Activated B cell treated with CpG ODN at 0.5 μM for 24 hours (primary cell): ENCODE measurements at regions of chr13 and their contacts with region 1.

Region 1: GRCh38 chr13:110412132-110412914 is 105.2 kb downstream of the COL4A2 start:
- DNase-seq: peak; percentile 39
- ATAC-seq: peak; percentile 90
- H3K4me3 Mint-ChIP-seq: no peak overlapping the region
- H3K27ac Mint-ChIP-seq: no peak overlapping the region
- H3K4me1 Mint-ChIP-seq: peaks cover 3% of the 10 kb centered on the region
- H3K27me3 Mint-ChIP-seq: peaks cover 24% of the 10 kb centered on the region
- CTCF ChIP-seq: peak; percentile 71

Region 2: DNA sequence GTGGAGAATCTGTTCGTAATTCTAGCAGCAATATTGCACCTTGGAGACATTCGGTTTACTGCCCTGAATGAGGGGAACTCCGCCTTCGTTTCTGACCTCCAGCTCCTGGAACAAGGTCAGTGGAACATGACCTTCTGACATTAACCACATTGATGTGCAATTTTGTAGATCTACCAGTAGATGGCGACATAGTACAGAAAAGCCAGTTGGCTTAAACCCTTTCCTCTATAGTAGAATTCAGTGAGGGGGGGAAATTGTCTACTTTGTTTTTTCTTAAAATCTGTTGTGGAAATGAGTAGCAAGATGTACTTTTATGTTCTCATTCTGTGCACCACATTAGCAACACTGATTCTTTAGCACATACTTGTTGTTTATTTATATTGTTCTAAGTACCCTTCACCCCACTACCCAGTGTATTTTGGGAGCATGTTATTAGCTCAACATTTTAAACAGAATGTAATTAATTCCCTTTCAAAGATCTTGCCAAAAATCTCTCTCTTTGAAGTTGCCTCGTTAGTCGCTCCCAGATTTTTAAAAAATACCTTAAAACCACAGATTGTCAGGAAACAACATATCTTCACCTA is 1450.7 kb before region 1 on chr13:
- CTCF ChIA-PET with region 1: interaction called, 22 read pairs
- POLR2A ChIA-PET with region 1: no interaction called
- intact Hi-C with region 1: no loop called
- DNase-seq: no peak
- ATAC-seq: peak; percentile 75
- H3K4me3 Mint-ChIP-seq: no peak overlapping the region
- H3K27ac Mint-ChIP-seq: no peak overlapping the region
- H3K4me1 Mint-ChIP-seq: no peaks in the 10 kb centered on the region
- H3K27me3 Mint-ChIP-seq: peaks cover 2% of the 10 kb centered on the region
- CTCF ChIP-seq: peak; percentile 94

Region 3: GRCh38 chr13:110218581-110219201 is 193.6 kb before region 1 on chr13:
- CTCF ChIA-PET with region 1: interaction called, 39 read pairs
- POLR2A ChIA-PET with region 1: no interaction called
- intact Hi-C with region 1: no loop called
- DNase-seq: no peak
- ATAC-seq: no peak
- H3K4me3 Mint-ChIP-seq: no peak overlapping the region
- H3K27ac Mint-ChIP-seq: no peak overlapping the region
- H3K4me1 Mint-ChIP-seq: no peaks in the 10 kb centered on the region
- H3K27me3 Mint-ChIP-seq: peaks cover 2% of the 10 kb centered on the region
- CTCF ChIP-seq: no peak